Ascending aorta (tissue), 2 donors: ENCODE measurements at regions of chr14 and their contacts with region 1.

Region 1: DNA sequence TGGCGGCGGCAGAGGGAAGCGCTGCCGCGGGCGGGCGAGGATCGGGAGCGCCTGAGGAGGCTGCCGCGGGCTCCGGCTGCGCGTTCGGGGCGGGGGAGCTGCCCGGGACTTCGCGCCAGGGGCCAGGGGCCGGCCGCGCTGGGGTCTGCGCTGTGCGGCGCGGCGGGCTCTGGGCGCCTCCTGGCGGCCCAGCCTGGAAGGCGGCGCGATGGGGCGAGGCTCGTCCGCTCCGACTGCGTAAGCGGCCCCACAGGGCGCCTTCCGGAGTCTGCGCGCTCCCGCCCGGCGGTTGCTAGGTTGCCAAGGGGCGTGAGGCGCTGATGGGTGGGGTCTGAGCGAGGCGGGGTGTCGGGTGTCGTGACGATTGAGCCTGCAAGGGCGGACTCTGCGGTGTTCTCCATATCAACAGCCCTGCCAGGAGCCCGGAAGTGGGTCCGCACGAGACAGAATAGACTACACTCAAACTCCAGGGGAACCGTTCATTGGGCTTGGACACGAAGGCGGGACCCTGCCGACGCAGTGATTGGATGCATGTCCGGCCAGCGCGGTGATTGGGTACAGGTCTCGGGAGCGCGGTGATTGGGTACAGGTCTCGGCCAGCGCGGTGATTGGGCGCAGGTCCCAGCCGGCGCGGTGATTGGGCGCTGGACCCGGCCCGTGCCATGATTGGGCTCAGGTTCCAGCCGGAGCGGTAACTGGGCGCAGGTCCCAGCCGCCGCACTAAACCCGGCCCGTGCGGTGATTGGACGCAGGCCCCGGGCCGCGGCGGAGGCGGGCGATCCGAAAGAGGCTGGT is at the start of gene TEDC1:
- DNase-seq: peak; percentile 100
- H3K4me3 ChIP-seq: peak within 1 kb of the TSS; percentile 77 to 90
- H3K27ac ChIP-seq: peak within 1 kb of the TSS; percentile 89 to 99
- H3K4me1 ChIP-seq: peaks cover 19 to 37% of the 10 kb centered on the region in 2 donors
- H3K27me3 ChIP-seq: no peaks in the 10 kb centered on the region
- CTCF ChIP-seq: peak; percentile 46 to 99 (median 57)
- total RNA-seq, gene TEDC1: 12.7 TPM

Region 2: GRCh38 chr14:105300792-105301533 is 189.8 kb before region 1 on chr14 and contains the start of gene BRF1:
- intact Hi-C with region 1: loop called (anchors 1 kb)
- DNase-seq: peak; percentile 88 to 98
- H3K4me3 ChIP-seq: peak within 1 kb of the TSS; percentile 62 to 84
- H3K27ac ChIP-seq: peak within 1 kb of the TSS; percentile 93 to 96
- H3K4me1 ChIP-seq: peaks cover 8 to 14% of the 10 kb centered on the region in 2 donors
- H3K27me3 ChIP-seq: no peaks in the 10 kb centered on the region
- CTCF ChIP-seq: no peak
- total RNA-seq, gene BRF1: 60.9 TPM

Region 3: GRCh38 chr14:105398044-105398725 is 92.6 kb before region 1 on chr14 and contains the start of gene TEX22:
- intact Hi-C with region 1: loop called (anchors 2 kb)
- DNase-seq: peak in 1 of 2 donors; percentile 92
- H3K4me3 ChIP-seq: peak within 1 kb of the TSS; percentile 80 to 90
- H3K27ac ChIP-seq: peak within 1 kb of the TSS; percentile 71 to 77
- H3K4me1 ChIP-seq: peaks cover 8% of the 10 kb centered on the region in 2 donors
- H3K27me3 ChIP-seq: no peaks in the 10 kb centered on the region
- CTCF ChIP-seq: peak in 1 of 3 experiments; percentile 15
- total RNA-seq, gene TEX22: not detected

Region 4: GRCh38 chr14:105448706-105449111 is 42.1 kb before region 1 on chr14:
- intact Hi-C with region 1: loop called (anchors 1 kb)
- DNase-seq: peak in 1 of 2 donors; percentile 85
- H3K4me3 ChIP-seq: no peak overlapping the region
- H3K27ac ChIP-seq: peak overlapping the region; percentile 45 to 49
- H3K4me1 ChIP-seq: peaks cover 3 to 10% of the 10 kb centered on the region in 2 donors
- H3K27me3 ChIP-seq: no peaks in the 10 kb centered on the region
- CTCF ChIP-seq: peak; percentile 92 to 98 (median 94)

Region 5: DNA sequence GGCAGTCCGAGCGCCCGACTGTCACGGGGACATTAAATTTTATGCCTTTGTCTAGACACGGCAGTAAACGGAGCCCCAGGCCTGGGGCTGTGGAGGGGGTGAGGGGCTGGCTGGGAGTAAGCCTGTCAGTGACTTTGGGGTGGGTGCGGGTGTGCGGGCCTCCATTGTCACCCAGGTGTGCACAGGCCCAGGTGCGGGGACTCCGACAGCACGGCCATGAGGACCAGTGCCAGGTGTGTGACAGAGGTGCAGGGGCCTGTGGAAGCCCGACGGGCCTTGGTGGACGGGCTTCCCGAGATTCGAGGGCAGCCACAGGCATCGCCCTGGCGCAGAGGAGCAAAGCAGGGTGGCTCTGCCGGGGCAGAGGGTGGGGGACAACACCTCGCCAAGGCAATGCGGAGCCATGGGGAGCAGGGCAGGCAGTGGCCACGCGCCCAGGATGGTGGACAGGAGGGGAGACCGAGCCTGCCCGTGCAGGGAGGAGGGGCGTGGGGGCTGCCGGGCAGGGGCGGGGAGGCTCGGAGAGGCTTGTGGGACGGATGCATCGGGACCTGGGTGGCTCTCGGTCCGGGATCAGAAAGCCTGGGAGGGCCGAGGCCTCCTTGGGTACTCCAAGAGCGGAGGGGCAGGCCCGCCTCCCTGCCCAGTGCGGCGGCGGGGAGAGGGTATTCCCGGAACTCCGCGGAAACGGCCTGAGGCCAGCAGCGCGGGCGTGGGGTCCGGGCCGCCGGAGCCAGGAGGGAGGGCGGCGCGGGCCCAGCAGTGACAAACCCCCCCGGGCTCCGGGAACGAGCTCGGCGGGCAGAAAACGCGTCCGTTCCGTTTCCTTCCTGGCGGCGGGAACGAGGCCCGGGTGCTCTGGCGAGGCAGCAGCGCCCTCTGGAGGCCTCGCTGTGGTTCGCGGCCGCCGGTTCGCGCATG is 37.2 kb after region 1 on chr14:
- intact Hi-C with region 1: loop called (anchors 2 kb)
- DNase-seq: peak in 1 of 2 donors; percentile 87
- H3K4me3 ChIP-seq: peak overlapping the region; percentile 69 to 91
- H3K27ac ChIP-seq: peak overlapping the region in 1 of 2 donors; percentile 53
- H3K4me1 ChIP-seq: peaks cover 12 to 21% of the 10 kb centered on the region in 2 donors
- H3K27me3 ChIP-seq: no peaks in the 10 kb centered on the region
- CTCF ChIP-seq: peak; percentile 83 to 90 (median 90)